Activated naive CD4-positive, alpha-beta T cell treated with anti-CD3 and anti-CD28 coated beads for 36 hours (primary cell): ENCODE measurements at regions of chr12 and their contacts with region 1.

Region 1: GRCh38 chr12:43241986-43242385 is 310.0 kb downstream of the ADAMTS20 start:
- DNase-seq: no peak
- H3K4me3 Mint-ChIP-seq: no peak overlapping the region
- H3K27ac Mint-ChIP-seq: no peak overlapping the region
- H3K4me1 Mint-ChIP-seq: no peaks in the 10 kb centered on the region
- H3K27me3 Mint-ChIP-seq: no peaks in the 10 kb centered on the region

Region 2: GRCh38 chr12:43198608-43199007 is 43.4 kb before region 1 on chr12:
- CTCF ChIA-PET with region 1: no interaction called
- intact Hi-C with region 1: loop called (anchors 1 kb)
- DNase-seq: no peak
- H3K4me3 Mint-ChIP-seq: no peak overlapping the region
- H3K27ac Mint-ChIP-seq: no peak overlapping the region
- H3K4me1 Mint-ChIP-seq: no peaks in the 10 kb centered on the region
- H3K27me3 Mint-ChIP-seq: no peaks in the 10 kb centered on the region